ENCODE measurements at regions of chr7 and their contacts with region 1.

Region 1: GRCh38 chr7:96910486-96910885 is 94.9 kb upstream of the DLX6 start:
- DNase-seq: peak in 1 of 4 donors; percentile 2
- ATAC-seq: no peak
- H3K4me3 ChIP-seq: no peak overlapping the region
- H3K27ac ChIP-seq: no peak overlapping the region
- H3K4me1 ChIP-seq: no peaks in the 10 kb centered on the region
- H3K27me3 ChIP-seq: no peaks in the 10 kb centered on the region
- CTCF ChIP-seq: no peak
- POLR2A ChIP-seq: no peak

Region 2: GRCh38 chr7:96973986-96974385 is 63.5 kb after region 1 on chr7:
- intact Hi-C with region 1: loop called (anchors 10 kb)
- DNase-seq: no peak
- ATAC-seq: no peak
- H3K4me3 ChIP-seq: no peak overlapping the region
- H3K27ac ChIP-seq: no peak overlapping the region
- H3K4me1 ChIP-seq: no peaks in the 10 kb centered on the region
- H3K27me3 ChIP-seq: no peaks in the 10 kb centered on the region
- CTCF ChIP-seq: no peak
- POLR2A ChIP-seq: no peak

Region 3: GRCh38 chr7:97130417-97131139 is 220.1 kb after region 1 on chr7:
- intact Hi-C with region 1: no loop called
- DNase-seq: no peak
- ATAC-seq: no peak
- H3K4me3 ChIP-seq: no peak overlapping the region
- H3K27ac ChIP-seq: no peak overlapping the region
- H3K4me1 ChIP-seq: no peaks in the 10 kb centered on the region
- H3K27me3 ChIP-seq: no peaks in the 10 kb centered on the region
- CTCF ChIP-seq: no peak
- POLR2A ChIP-seq: no peak

Measured in body of pancreas (tissue), 4 donors.